ENCODE measurements at regions of chr16 and their contacts with region 1.

Region 1: DNA sequence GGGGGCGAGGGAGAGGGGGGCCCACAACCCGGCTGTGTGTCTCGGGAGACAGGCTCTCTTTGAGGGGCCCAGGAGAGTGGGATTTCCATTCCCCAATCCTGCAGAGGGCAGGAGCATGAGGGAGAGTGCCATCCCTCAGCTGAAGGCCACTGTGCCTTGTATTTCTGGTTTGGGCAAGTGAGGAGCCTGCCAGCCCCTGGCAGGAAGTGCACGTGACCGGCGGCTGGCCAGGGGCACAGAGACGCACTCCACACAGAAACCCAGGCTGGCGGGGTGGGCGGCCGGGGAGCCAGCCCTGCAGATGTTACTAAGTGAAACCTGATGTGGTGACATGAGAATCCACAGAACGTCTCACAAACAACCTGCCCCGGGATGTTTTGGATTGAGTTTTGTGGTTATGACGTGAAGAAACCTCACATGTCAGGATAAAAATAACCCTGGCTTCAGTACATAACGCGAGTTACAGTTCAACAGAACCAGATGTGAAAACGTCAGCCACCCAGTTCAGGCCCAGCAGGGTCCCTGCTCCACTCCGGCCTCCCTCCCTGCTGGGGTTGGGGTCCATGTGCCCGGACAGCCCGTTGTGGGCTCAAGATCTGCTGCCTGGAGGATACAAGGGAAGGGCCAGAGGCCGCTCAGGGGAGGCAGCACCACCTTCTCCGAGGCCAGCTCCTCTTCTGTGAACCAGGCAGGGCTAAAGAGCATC is 51.7 kb upstream of the MTSS2 start:
- DNase-seq: peak; percentile 91
- ATAC-seq: peak; percentile 92
- H3K4me3 Mint-ChIP-seq: peak overlapping the region; percentile 70
- H3K27ac Mint-ChIP-seq: peak overlapping the region; percentile 99
- H3K4me1 Mint-ChIP-seq: peaks cover 74% of the 10 kb centered on the region
- H3K27me3 Mint-ChIP-seq: no peaks in the 10 kb centered on the region

Region 2: DNA sequence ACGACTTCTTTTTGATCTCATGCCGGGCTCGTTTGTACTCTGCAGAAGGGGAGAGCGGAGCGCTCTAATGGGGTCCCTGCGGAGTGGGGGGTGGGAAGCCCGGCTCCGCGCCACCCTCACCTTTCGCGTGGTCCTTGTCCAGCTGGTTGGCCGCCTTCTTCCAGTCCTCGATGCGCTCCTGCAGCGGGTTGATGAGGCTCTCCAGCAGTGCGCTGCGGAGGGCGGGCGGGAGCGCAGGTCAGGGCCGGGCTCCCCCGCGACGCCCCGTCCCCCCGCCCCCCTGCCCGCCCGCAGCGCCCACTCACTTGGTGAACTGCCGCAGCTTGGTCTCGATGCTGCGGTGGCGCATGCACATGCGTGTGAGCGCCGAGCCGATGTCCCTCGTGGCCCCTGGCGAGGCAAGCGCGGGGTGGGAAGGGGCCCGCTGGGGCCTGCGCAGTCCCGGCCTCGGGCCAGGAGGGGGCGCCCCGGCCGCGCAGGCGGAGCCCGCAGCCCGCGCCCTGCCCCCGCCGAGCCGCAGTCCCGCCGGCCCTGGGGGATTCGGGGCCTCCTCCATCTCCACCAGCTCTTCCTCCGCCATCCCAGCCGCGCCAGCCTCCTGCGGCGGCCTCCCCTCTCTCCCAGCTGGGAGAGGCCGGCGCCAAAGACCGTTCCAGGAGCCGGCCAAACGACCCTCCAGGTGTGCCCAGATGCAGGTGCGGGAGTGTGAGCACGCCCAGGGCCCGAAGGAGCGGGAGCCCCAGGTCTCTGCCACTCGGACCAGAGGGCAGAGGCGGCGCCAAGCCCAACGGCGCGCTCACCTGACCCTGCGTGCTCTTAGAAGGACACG is 57.6 kb before region 1 on chr16:
- CTCF ChIA-PET with region 1: interaction called, 23 read pairs
- POLR2A ChIA-PET with region 1: interaction called, 3 read pairs
- DNase-seq: no peak
- ATAC-seq: no peak
- H3K4me3 Mint-ChIP-seq: no peak overlapping the region
- H3K27ac Mint-ChIP-seq: no peak overlapping the region
- H3K4me1 Mint-ChIP-seq: peaks cover 23% of the 10 kb centered on the region
- H3K27me3 Mint-ChIP-seq: peaks cover 2% of the 10 kb centered on the region

Region 3: GRCh38 chr16:70695331-70696070 is 42.0 kb before region 1 on chr16:
- CTCF ChIA-PET with region 1: interaction called, 26 read pairs
- POLR2A ChIA-PET with region 1: interaction called, 31 read pairs
- DNase-seq: peak; percentile 68
- ATAC-seq: peak; percentile 56
- H3K4me3 Mint-ChIP-seq: peak overlapping the region; percentile 56
- H3K27ac Mint-ChIP-seq: peak overlapping the region; percentile 91
- H3K4me1 Mint-ChIP-seq: peaks cover 45% of the 10 kb centered on the region
- H3K27me3 Mint-ChIP-seq: no peaks in the 10 kb centered on the region

Region 4: GRCh38 chr16:70790815-70791214 is 53.3 kb after region 1 on chr16:
- CTCF ChIA-PET with region 1: no interaction called
- POLR2A ChIA-PET with region 1: no interaction called
- DNase-seq: no peak
- ATAC-seq: no peak
- H3K4me3 Mint-ChIP-seq: no peak overlapping the region
- H3K27ac Mint-ChIP-seq: no peak overlapping the region
- H3K4me1 Mint-ChIP-seq: no peaks in the 10 kb centered on the region
- H3K27me3 Mint-ChIP-seq: no peaks in the 10 kb centered on the region

Measured in activated CD8-positive, alpha-beta T cell treated with anti-CD3 and anti-CD28 coated beads, Interleukin-2, amount 10 ng/mL, durations not matched to agents 7 days and 5 days (primary cell).